Mammary epithelial cell (primary cell): ENCODE measurements at regions of chr9 and their contacts with region 1.

Region 1: DNA sequence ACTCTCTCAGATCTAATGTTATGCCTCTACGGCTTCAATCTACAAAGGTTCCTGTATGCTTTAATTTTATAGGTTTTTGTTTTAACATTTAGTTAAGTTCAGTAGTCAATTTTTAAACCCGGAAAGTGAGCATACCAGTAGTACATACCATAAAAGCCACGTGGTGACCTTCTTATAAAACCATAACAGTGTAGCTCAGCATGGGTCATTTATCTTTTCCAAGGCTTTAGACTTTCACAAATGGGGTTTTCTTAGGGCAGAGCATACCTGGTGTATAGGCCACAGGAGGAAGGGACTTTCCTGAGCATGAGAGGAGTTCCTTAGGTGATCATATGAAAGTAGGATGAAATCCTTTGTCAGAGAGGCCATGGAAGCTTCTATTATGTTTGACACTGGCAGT is 23.2 kb downstream of the ECM2 start:
- DNase-seq: peak; percentile 9
- H3K4me3 ChIP-seq: no peak overlapping the region
- H3K27ac ChIP-seq: no peak overlapping the region
- H3K4me1 ChIP-seq: no peaks in the 10 kb centered on the region
- H3K27me3 ChIP-seq: no peaks in the 10 kb centered on the region
- CTCF ChIP-seq: no peak

Region 2: DNA sequence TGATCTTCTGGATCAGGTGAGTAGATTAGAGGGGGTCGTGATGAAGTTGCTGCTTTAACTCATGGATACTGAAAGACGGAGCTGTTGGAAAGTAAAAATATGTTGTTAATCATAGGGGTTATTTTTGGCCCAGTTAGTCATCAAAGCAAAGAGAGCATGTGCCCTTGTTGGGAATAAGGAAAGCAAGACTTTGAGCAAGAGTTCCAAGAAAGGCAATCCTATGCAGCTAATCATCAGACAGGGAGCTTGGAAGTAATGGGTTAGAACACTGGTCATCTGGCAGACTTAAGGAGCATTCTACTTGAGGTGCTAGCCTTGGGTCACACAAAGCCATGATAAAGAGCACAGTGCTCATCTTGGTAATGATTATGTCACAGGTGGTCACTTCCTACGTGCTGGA is 48.6 kb before region 1 on chr9:
- CTCF ChIA-PET with region 1: no interaction called
- dilution Hi-C with region 1: no loop called
- in situ Hi-C with region 1: no loop called
- intact Hi-C with region 1: no loop called
- DNase-seq: peak; percentile 60
- H3K4me3 ChIP-seq: no peak overlapping the region
- H3K27ac ChIP-seq: no peak overlapping the region
- H3K4me1 ChIP-seq: no peaks in the 10 kb centered on the region
- H3K27me3 ChIP-seq: no peaks in the 10 kb centered on the region
- CTCF ChIP-seq: no peak

Region 3: GRCh38 chr9:92547356-92547755 is 34.7 kb after region 1 on chr9:
- CTCF ChIA-PET with region 1: no interaction called
- dilution Hi-C with region 1: loop called (anchors 5 kb)
- in situ Hi-C with region 1: no loop called
- intact Hi-C with region 1: no loop called
- DNase-seq: no peak
- H3K4me3 ChIP-seq: no peak overlapping the region
- H3K27ac ChIP-seq: no peak overlapping the region
- H3K4me1 ChIP-seq: no peaks in the 10 kb centered on the region
- H3K27me3 ChIP-seq: no peaks in the 10 kb centered on the region
- CTCF ChIP-seq: no peak